Aorta (tissue), 5 donors: ENCODE measurements at regions of chr4 and their contacts with region 1.

Region 1: GRCh38 chr4:88728146-88728545 is 30.5 kb upstream of the NAP1L5 start:
- DNase-seq: peak in 1 of 2 donors; percentile 60
- ATAC-seq: peak; percentile 84
- H3K4me3 ChIP-seq: no peak overlapping the region
- H3K27ac ChIP-seq: peak overlapping the region in 1 of 2 donors; percentile 7
- H3K4me1 ChIP-seq: peaks cover 0 to 3% of the 10 kb centered on the region in 2 donors
- H3K27me3 ChIP-seq: no peaks in the 10 kb centered on the region

Region 2: GRCh38 chr4:88628759-88629158 is 99.4 kb before region 1 on chr4:
- intact Hi-C with region 1: no loop called
- DNase-seq: no peak
- ATAC-seq: no peak
- H3K4me3 ChIP-seq: no peak overlapping the region
- H3K27ac ChIP-seq: no peak overlapping the region
- H3K4me1 ChIP-seq: no peaks in the 10 kb centered on the region
- H3K27me3 ChIP-seq: no peaks in the 10 kb centered on the region

Region 3: GRCh38 chr4:88803600-88804096 is 75.5 kb after region 1 on chr4:
- intact Hi-C with region 1: loop called in 1 of 2 experiments (anchors 5 kb)
- DNase-seq: no peak
- ATAC-seq: peak; percentile 74
- H3K4me3 ChIP-seq: no peak overlapping the region
- H3K27ac ChIP-seq: no peak overlapping the region
- H3K4me1 ChIP-seq: peaks cover 2 to 7% of the 10 kb centered on the region in 2 donors
- H3K27me3 ChIP-seq: no peaks in the 10 kb centered on the region

Region 4: GRCh38 chr4:89024051-89024675 is 296.0 kb after region 1 on chr4:
- intact Hi-C with region 1: no loop called
- DNase-seq: no peak
- ATAC-seq: peak; percentile 95
- H3K4me3 ChIP-seq: no peak overlapping the region
- H3K27ac ChIP-seq: no peak overlapping the region
- H3K4me1 ChIP-seq: peaks cover 0 to 3% of the 10 kb centered on the region in 2 donors
- H3K27me3 ChIP-seq: no peaks in the 10 kb centered on the region